WTC11 (cell line): ENCODE measurements at regions of chr11 and their contacts with region 1.

Region 1: GRCh38 chr11:122853971-122854446 is 15.7 kb downstream of the CRTAM start:
- DNase-seq: peak; percentile 39
- ATAC-seq: peak; percentile 86
- H3K4me3 Mint-ChIP-seq: no peak overlapping the region
- H3K27ac Mint-ChIP-seq: no peak overlapping the region
- H3K4me1 Mint-ChIP-seq: peaks cover 34% of the 10 kb centered on the region
- H3K27me3 Mint-ChIP-seq: no peaks in the 10 kb centered on the region
- CTCF ChIP-seq: peak; percentile 59; the same call in 1 of the 2 replicates

Region 2: DNA sequence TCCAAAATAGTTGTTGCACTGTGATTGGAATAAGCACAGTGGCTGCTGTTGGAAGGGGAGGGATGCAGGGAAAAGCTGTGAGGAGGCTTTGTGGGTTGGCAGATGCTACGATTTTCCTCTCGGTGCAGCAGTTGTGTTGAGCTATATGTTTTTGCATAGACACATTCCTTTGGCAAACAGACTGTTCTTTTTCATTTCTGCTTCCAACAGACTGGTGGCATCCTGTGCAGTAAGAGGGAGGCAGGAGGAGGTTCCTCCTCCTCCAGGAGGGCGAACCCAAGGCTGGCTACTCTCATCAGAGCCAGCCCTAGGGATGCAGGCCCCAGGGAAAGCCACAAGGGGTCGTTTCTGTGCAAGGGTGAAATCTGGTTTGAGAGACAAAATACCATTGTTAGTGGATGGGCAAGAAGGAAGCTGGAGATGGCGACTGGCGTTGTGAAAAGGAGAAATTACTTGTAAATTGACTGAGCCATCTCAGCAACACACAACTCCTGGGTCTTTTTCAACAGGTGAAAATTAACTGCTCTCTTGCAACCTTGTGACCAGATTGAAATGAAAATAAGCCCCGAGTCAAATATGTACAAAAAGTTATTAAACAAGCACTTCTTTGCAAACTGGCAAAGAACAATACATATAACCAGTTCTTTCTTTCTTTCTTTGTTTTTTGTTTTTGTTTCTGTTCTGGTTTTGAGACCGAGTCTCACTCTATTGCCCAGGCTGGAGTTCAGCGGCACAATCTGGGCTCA is 225.0 kb before region 1 on chr11:
- CTCF ChIA-PET with region 1: interaction called, 27 read pairs
- POLR2A ChIA-PET with region 1: no interaction called
- DNase-seq: peak; percentile 81
- ATAC-seq: peak; percentile 98
- H3K4me3 Mint-ChIP-seq: no peak overlapping the region
- H3K27ac Mint-ChIP-seq: no peak overlapping the region
- H3K4me1 Mint-ChIP-seq: no peaks in the 10 kb centered on the region; the same call in 1 of the 2 replicates
- H3K27me3 Mint-ChIP-seq: no peaks in the 10 kb centered on the region; the same call in 1 of the 2 replicates
- CTCF ChIP-seq: peak; percentile 63; the same call in 1 of the 2 replicates

Region 3: DNA sequence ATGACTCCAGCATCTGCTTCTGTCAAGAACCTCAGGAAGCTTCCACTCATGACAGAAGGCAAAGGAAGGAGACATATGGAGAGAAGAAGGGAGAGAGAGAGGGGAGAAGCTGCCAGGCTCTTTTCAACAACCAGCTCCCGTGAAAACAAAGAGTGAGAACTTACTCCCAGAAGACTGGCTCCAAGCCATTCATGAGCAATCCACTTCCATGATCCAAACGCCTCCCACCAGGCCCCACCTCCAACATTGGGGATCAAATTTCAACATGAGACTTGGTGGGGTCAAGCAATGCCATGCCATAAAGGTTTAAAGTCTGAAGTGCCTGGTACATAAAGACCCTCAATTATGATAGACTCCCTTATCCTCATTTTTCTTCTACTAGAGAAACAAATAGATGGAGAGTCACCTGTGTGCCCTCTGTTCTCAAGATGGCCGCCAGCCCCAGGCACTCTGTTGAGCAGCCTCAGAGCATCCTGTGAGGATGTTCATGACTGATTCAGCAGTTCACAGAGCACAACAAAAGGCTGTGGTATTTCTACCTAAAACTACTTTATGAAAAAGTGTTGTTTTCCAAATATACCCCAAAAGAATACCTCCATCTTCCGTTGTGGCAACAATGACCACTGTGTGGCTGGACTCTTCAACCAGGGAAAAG is 84.8 kb before region 1 on chr11:
- CTCF ChIA-PET with region 1: no interaction called
- POLR2A ChIA-PET with region 1: no interaction called
- DNase-seq: no peak
- ATAC-seq: no peak
- H3K4me3 Mint-ChIP-seq: no peak overlapping the region
- H3K27ac Mint-ChIP-seq: no peak overlapping the region
- H3K4me1 Mint-ChIP-seq: peaks cover 5% of the 10 kb centered on the region; the same call in 1 of the 2 replicates
- H3K27me3 Mint-ChIP-seq: no peaks in the 10 kb centered on the region; the same call in 1 of the 2 replicates
- CTCF ChIP-seq: no peak

Region 4: DNA sequence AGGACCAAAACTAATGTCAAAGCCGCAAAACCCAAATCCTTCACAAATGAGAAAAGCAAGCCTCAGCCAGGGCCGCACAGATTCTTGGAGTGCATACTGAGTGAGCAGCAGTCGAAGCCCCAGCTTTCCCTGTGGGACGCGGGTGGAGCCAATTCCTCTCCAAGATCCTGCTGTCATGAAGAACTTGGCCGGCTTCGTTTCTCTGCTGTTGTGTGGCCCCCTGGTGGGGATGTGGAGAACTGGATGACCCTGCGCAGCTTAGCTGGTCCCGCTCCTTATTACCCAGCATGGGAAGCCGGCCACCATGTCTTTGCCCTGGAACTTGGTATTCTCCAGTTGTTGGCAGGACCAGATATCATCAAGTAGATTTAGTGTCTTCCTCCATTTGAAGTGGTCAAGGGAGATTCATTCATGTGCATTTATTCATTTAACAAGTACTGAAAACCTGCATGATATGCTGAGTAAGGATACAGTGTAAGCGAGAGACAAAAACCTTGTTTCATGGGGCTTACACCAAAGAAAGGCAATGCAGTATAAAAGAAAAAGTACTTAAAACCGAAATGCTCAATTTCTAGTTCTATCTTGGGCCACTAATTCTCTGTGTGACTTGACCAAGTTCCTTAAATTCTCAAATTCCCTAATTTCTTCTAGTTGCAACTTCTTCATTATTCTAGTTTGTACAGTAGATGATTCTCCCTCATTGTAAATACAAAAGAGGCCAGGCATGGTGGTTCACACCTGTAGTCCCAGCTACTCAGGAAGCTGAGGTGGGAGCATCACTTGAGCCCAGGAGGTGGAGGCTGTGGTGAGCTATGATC is 72.4 kb before region 1 on chr11:
- CTCF ChIA-PET with region 1: interaction called, 24 read pairs
- POLR2A ChIA-PET with region 1: no interaction called
- DNase-seq: peak; percentile 92
- ATAC-seq: peak; percentile 95
- H3K4me3 Mint-ChIP-seq: no peak overlapping the region
- H3K27ac Mint-ChIP-seq: no peak overlapping the region
- H3K4me1 Mint-ChIP-seq: peaks cover 18% of the 10 kb centered on the region
- H3K27me3 Mint-ChIP-seq: no peaks in the 10 kb centered on the region
- CTCF ChIP-seq: peak; percentile 85

Region 5: DNA sequence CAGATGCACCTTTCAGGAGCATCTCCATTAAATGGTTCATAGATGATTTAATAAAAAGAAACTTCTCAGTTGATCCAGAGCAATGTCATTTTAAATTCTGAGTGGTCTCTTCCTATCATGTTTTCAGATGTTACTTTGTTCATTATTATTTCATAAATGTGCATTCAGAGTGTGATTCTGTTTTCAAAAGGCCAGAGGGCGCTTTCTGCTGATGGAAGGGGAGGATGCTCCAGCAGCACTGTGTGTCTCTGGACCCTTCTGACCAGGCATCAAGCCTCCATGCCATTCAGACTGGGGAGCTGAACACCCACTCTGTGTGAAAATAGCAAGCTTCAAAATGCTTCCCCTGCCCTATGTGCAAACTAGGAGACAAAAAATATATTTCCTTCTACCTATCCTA is 39.6 kb before region 1 on chr11:
- CTCF ChIA-PET with region 1: interaction called, 60 read pairs
- POLR2A ChIA-PET with region 1: no interaction called
- DNase-seq: no peak
- ATAC-seq: peak; percentile 34
- H3K4me3 Mint-ChIP-seq: no peak overlapping the region
- H3K27ac Mint-ChIP-seq: 0 out of 2 replicates have a peak overlapping the region, but pooled peaks have one; percentile 2
- H3K4me1 Mint-ChIP-seq: peaks cover 57% of the 10 kb centered on the region
- H3K27me3 Mint-ChIP-seq: no peaks in the 10 kb centered on the region; the same call in 1 of the 2 replicates
- CTCF ChIP-seq: no peak